Activated T-helper 2 cell treated with anti-CD3 and anti-CD28 coated beads, Interferon-gamma antibody, Interleukin-2, Interleukin-4, amounts not matched to agents 10 μg/mL and 5 μg/mL and 100 μg/mL, durations not matched to agents 14 hours and 24 hours and 36 hours (primary cell): ENCODE measurements at regions of chr1 and their contacts with region 1.

Region 1: DNA sequence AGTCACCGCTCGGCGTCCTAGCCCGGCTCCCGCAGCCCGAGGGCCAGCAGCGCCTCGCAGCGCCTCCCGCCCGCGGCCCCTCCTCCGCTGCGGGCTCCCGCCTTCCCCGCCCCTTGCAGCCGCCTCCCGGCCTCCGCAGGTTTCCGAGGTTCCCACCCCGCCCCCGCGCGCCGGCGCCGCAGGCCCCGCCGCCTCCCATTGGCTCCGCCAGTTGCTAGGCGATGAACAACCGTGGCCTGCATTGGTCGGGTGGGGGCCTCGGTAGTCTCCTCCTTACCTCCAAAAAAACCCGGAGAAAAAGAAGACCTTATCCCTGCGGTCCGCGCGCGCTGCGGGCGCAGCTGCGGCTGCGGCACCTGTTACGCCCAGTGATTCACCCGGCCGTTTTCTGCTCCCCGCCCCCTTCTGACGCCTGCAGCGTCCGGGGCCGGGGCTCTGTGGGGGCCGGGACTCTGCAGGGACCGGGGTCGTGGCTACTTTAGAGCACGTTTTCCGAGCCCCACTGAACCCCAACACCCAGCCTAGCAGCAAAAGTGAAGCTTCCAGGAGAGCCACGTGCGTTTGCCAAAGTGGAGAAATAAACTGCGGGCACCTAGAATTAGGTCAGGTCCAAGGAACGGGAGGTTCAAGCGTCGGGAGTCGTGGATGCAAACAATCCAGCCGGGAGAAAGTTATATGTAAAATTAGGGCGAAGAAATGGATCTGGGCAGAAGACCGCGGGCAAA is at the start of gene SSX2IP:
- DNase-seq: peak; percentile 98
- H3K4me3 Mint-ChIP-seq: peak within 1 kb of the TSS; percentile 94
- H3K27ac Mint-ChIP-seq: peak within 1 kb of the TSS; percentile 94
- H3K4me1 Mint-ChIP-seq: peaks cover 46% of the 10 kb centered on the region
- H3K27me3 Mint-ChIP-seq: no peaks in the 10 kb centered on the region
- total RNA-seq, gene SSX2IP: 12.1 and 13.0 TPM in 2 replicates

Region 2: DNA sequence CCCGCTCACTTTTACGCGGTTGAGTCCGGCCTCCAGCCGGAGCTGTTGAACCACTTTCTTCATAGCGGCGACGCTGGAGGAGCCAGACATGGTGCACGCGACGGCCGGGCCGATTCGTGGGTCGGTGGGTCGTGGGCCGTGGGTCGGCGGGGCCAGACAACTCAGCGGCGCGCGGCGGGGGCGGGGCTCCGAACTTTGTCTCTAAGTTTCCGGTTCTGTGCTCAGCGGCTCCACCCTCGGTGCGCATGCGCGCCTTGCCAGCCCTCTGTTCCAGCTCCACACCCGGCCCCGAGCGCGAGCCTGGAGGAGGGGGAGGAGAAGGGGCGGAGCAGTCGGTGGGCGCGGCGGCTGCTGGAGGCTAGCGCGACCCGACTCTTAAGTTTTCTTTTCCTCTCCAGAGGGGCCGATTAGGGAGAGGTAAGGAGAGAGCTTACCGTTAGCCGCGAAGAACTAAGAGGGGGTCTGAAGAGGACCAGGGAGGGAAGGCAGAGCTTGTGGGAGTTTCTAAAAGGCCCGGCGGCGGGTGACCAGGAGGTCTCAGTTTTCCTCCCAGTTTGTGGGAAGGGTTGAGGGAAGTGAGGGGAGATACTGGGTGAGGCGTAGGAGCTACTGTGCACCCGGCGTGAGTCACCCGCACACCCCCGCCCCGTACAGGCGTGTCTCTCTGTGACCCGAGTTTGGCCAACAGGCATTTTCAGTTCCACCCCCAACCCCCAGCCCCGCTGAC is 184.4 kb before region 1 on chr1 and contains the starts of genes GNG5 and SPATA1:
- intact Hi-C with region 1: loop called (anchors 1 kb)
- DNase-seq: peak; percentile 97
- H3K4me3 Mint-ChIP-seq: peak within 1 kb of the TSS; percentile 100
- H3K27ac Mint-ChIP-seq: peak within 1 kb of the TSS; percentile 99
- H3K4me1 Mint-ChIP-seq: peaks cover 26% of the 10 kb centered on the region
- H3K27me3 Mint-ChIP-seq: no peaks in the 10 kb centered on the region
- total RNA-seq, gene GNG5: 118 and 126 TPM in 2 replicates
- total RNA-seq, gene SPATA1: 1.4 and 1.5 TPM in 2 replicates

Region 3: DNA sequence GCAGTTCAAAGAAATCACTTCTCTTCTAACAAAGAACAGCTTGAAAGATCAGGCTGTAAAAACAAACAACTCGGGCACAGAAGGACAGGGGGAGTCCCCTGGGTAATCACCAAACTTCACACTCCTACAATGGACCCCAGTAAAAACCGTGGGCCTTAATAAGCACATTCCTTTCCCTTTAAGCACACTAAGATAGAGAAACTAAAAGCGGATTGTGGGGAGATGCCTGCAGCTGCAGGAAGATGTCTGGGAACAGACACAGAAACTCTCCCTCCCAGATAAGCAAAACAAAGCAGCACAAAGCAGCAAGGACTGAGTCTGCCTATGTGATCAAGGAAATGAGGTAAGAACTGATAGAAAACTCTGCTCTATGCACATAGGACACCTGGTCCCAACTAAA is 78.8 kb before region 1 on chr1:
- intact Hi-C with region 1: no loop called
- DNase-seq: no peak
- H3K4me3 Mint-ChIP-seq: no peak overlapping the region
- H3K27ac Mint-ChIP-seq: no peak overlapping the region
- H3K4me1 Mint-ChIP-seq: no peaks in the 10 kb centered on the region
- H3K27me3 Mint-ChIP-seq: no peaks in the 10 kb centered on the region

Region 4: DNA sequence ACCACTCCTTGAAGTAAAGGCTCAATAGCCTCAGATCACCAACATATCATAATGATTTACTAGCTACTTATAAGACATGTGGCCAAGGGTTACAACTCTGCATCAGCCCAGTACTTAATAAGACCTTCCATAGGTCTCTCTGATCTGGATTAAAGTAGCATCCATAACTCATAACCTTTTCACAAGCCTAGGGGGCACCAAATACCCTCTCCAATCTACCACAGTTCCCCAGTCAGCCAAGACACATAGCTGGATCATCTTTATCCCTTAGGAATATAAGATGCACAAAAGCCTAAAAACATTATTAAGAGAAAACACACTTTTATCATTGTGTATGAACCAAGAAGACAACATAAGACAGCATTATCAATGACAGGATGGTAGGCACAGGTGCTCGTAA is 22.4 kb before region 1 on chr1:
- intact Hi-C with region 1: loop called (anchors 2 kb)
- DNase-seq: no peak
- H3K4me3 Mint-ChIP-seq: no peak overlapping the region
- H3K27ac Mint-ChIP-seq: no peak overlapping the region
- H3K4me1 Mint-ChIP-seq: peaks cover 9% of the 10 kb centered on the region
- H3K27me3 Mint-ChIP-seq: no peaks in the 10 kb centered on the region

Region 5: GRCh38 chr1:84721152-84721551 is 30.6 kb after region 1 on chr1:
- intact Hi-C with region 1: loop called (anchors 2 kb)
- DNase-seq: no peak
- H3K4me3 Mint-ChIP-seq: no peak overlapping the region
- H3K27ac Mint-ChIP-seq: no peak overlapping the region
- H3K4me1 Mint-ChIP-seq: peaks cover 18% of the 10 kb centered on the region
- H3K27me3 Mint-ChIP-seq: no peaks in the 10 kb centered on the region

Region 6: GRCh38 chr1:84732520-84732919 is 42.0 kb after region 1 on chr1:
- intact Hi-C with region 1: no loop called
- DNase-seq: no peak
- H3K4me3 Mint-ChIP-seq: no peak overlapping the region
- H3K27ac Mint-ChIP-seq: no peak overlapping the region
- H3K4me1 Mint-ChIP-seq: no peaks in the 10 kb centered on the region
- H3K27me3 Mint-ChIP-seq: peaks cover 45% of the 10 kb centered on the region

Region 7: DNA sequence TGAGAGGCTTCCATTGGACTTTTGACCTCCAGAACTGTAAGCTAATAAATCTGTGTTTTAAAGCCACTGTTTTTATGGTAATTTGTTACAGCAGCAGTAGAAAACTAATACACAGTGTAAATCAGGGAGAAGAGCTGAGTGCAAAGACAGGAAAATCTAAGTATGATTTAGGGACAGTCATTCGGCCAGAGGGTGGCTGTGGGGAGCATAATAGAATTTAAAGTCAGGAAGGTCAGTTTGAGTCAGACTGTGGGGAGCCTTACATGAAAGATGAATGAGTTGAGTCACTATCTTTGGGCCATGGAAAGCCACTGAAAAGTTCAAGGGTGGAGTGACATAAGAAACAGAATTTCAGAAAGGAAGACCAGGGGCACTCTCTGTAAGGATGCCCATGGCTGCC is 52.1 kb after region 1 on chr1:
- intact Hi-C with region 1: loop called (anchors 2 kb)
- DNase-seq: no peak
- H3K4me3 Mint-ChIP-seq: no peak overlapping the region
- H3K27ac Mint-ChIP-seq: no peak overlapping the region
- H3K4me1 Mint-ChIP-seq: peaks cover 11% of the 10 kb centered on the region
- H3K27me3 Mint-ChIP-seq: no peaks in the 10 kb centered on the region